CD4-positive, alpha-beta T cell (primary cell): ENCODE measurements at regions of chr1 and their contacts with region 1.

Region 1: GRCh38 chr1:147890177-147890790 is 12.3 kb upstream of the GJA8 start:
- DNase-seq: peak; percentile 33 to 73 (median 52)
- ATAC-seq: peak; percentile 65
- H3K4me3 ChIP-seq: no peak overlapping the region
- H3K4me3 Mint-ChIP-seq: no peak overlapping the region
- H3K27ac ChIP-seq: no peak overlapping the region
- H3K27ac Mint-ChIP-seq: no peak overlapping the region
- H3K4me1 ChIP-seq: peaks cover 2% of the 10 kb centered on the region
- H3K4me1 Mint-ChIP-seq: peaks cover 8% of the 10 kb centered on the region
- H3K27me3 ChIP-seq: no peaks in the 10 kb centered on the region
- H3K27me3 Mint-ChIP-seq: peaks cover 5% of the 10 kb centered on the region
- CTCF ChIP-seq: peak; percentile 68

Region 2: DNA sequence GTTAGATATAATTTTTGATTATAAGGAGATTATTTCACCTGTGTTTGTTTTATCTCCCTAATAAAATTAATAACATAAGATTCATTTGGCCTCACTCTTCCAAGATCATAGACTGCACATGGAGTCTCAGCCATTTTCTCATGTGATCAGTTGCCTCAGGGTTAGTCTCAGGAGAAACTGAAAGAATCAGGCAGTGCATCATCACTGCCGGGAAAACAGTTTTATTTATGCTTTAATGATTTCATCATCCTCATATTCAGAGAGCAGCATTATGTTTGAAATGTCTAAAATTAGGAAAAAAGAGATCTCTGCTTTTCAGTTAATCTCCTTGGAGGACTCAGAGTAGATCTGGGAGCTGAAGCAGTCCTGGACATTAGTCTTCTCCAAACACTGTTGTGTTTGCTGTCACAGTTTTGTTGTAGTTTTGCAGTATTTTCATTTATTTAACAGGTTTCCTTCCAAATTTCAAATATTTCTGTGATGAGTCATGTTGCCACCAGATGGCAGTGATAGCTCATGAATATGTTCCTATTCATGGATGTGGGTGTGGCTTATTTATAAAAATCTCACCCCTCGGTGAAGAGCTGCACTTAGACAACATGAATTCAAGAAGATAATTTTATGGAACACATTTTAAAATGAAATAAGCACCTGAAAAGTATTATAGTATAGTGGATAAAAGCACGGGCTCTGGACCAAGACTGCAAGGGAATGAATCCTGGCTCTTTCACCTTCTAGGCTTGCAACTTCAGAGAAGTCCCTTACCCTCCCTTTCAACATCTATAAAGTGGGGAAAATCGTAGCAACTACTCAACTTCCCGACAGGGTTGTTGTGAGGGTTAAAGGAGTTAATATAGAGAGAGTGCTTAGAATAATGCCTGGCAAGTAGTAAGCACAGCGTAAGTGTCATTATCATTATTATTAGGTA is 616.6 kb before region 1 on chr1:
- CTCF ChIA-PET with region 1: interaction called, 13 read pairs
- POLR2A ChIA-PET with region 1: interaction called, 3 read pairs
- intact Hi-C with region 1: loop called (anchors 1 to 2 kb)
- DNase-seq: peak in 6 of 14 experiments; percentile 0 to 71 (median 46)
- ATAC-seq: peak; percentile 68
- H3K4me3 ChIP-seq: no peak overlapping the region
- H3K4me3 Mint-ChIP-seq: no peak overlapping the region
- H3K27ac ChIP-seq: no peak overlapping the region
- H3K27ac Mint-ChIP-seq: no peak overlapping the region
- H3K4me1 ChIP-seq: no peaks in the 10 kb centered on the region
- H3K4me1 Mint-ChIP-seq: no peaks in the 10 kb centered on the region
- H3K27me3 ChIP-seq: no peaks in the 10 kb centered on the region
- H3K27me3 Mint-ChIP-seq: no peaks in the 10 kb centered on the region
- CTCF ChIP-seq: peak; percentile 76

Region 3: GRCh38 chr1:147515046-147515869 is 375.0 kb before region 1 on chr1:
- CTCF ChIA-PET with region 1: no interaction called
- POLR2A ChIA-PET with region 1: no interaction called
- intact Hi-C with region 1: loop called in 1 of 2 experiments (anchors 5 kb)
- DNase-seq: peak in 4 of 14 experiments; percentile 34 to 55 (median 45)
- ATAC-seq: peak; percentile 70
- H3K4me3 ChIP-seq: no peak overlapping the region
- H3K4me3 Mint-ChIP-seq: no peak overlapping the region
- H3K27ac ChIP-seq: no peak overlapping the region
- H3K27ac Mint-ChIP-seq: no peak overlapping the region
- H3K4me1 ChIP-seq: no peaks in the 10 kb centered on the region
- H3K4me1 Mint-ChIP-seq: peaks cover 7% of the 10 kb centered on the region
- H3K27me3 ChIP-seq: no peaks in the 10 kb centered on the region
- H3K27me3 Mint-ChIP-seq: no peaks in the 10 kb centered on the region
- CTCF ChIP-seq: peak; percentile 67

Region 4: GRCh38 chr1:147700042-147701006 is 190.0 kb before region 1 on chr1:
- CTCF ChIA-PET with region 1: no interaction called
- POLR2A ChIA-PET with region 1: no interaction called
- intact Hi-C with region 1: loop called in 1 of 2 experiments (anchors 2 kb)
- DNase-seq: peak; percentile 36 to 79 (median 50)
- ATAC-seq: peak; percentile 92
- H3K4me3 ChIP-seq: peak overlapping the region; percentile 27
- H3K4me3 Mint-ChIP-seq: peak overlapping the region; percentile 46
- H3K27ac ChIP-seq: peak overlapping the region in 1 of 2 donors; percentile 35
- H3K27ac Mint-ChIP-seq: peak overlapping the region; percentile 62
- H3K4me1 ChIP-seq: peaks cover 14% of the 10 kb centered on the region
- H3K4me1 Mint-ChIP-seq: peaks cover 15% of the 10 kb centered on the region
- H3K27me3 ChIP-seq: peaks cover 0 to 6% of the 10 kb centered on the region in 2 experiments
- H3K27me3 Mint-ChIP-seq: peaks cover 19% of the 10 kb centered on the region
- CTCF ChIP-seq: peak; percentile 92

Region 5: DNA sequence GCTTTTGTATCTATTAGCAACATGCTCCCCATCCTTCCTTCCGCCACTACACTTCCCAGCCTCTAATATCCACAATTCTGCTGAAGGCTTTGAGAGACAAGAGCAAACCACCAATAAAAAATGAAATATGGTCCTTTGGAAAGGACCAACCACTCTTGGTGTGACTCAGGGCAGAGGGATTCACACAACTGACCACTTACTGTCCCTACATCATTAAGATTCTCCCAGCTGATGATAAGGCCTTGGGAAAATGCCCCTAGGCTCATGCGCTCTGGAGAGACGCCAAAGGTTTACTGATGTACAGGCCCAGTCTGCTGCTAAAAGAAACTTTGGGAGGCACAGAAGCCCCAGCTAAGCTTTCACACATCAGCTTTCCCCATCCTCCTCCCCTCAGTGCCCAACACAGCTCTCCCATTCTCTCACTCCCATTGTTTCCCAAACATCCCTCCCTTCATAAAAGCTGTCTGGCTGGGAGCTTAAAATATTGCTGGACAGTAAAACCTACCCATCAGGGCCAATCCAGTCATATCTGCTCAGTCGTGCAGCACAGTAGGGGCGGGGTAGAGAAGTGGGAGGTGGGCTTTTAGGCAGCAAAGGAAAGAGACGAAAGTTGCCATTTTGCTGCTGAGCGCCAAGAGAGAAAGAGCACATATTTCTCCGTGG is 12.0 kb after region 1 on chr1 and contains the start of gene GJA8:
- CTCF ChIA-PET with region 1: interaction called, 21 read pairs
- POLR2A ChIA-PET with region 1: no interaction called
- intact Hi-C with region 1: no loop called
- DNase-seq: no peak
- ATAC-seq: no peak
- H3K4me3 ChIP-seq: no peak within 1 kb of the TSS
- H3K4me3 Mint-ChIP-seq: no peak within 1 kb of the TSS
- H3K27ac ChIP-seq: no peak within 1 kb of the TSS
- H3K27ac Mint-ChIP-seq: no peak within 1 kb of the TSS
- H3K4me1 ChIP-seq: no peaks in the 10 kb centered on the region
- H3K4me1 Mint-ChIP-seq: peaks cover 6% of the 10 kb centered on the region
- H3K27me3 ChIP-seq: peaks cover 0 to 2% of the 10 kb centered on the region in 2 experiments
- H3K27me3 Mint-ChIP-seq: no peaks in the 10 kb centered on the region
- CTCF ChIP-seq: no peak
- total RNA-seq, gene GJA8: not detected